Aorta (tissue), 5 donors: ENCODE measurements at regions of chr9 and their contacts with region 1.

Region 1: GRCh38 chr9:83544002-83544698 is 5.9 kb upstream of the FRMD3 start:
- DNase-seq: no peak
- ATAC-seq: peak; percentile 80
- H3K4me3 ChIP-seq: no peak overlapping the region
- H3K27ac ChIP-seq: no peak overlapping the region
- H3K4me1 ChIP-seq: no peaks in the 10 kb centered on the region
- H3K27me3 ChIP-seq: no peaks in the 10 kb centered on the region

Region 2: GRCh38 chr9:83208065-83208850 is 335.9 kb before region 1 on chr9:
- intact Hi-C with region 1: loop called (anchors 5 to 10 kb)
- DNase-seq: no peak
- ATAC-seq: no peak
- H3K4me3 ChIP-seq: no peak overlapping the region
- H3K27ac ChIP-seq: no peak overlapping the region
- H3K4me1 ChIP-seq: no peaks in the 10 kb centered on the region
- H3K27me3 ChIP-seq: no peaks in the 10 kb centered on the region

Region 3: GRCh38 chr9:83219152-83219923 is 324.8 kb before region 1 on chr9:
- intact Hi-C with region 1: loop called in 1 of 2 experiments (anchors 10 kb)
- DNase-seq: peak; percentile 76 to 88
- ATAC-seq: peak; percentile 94
- H3K4me3 ChIP-seq: peak overlapping the region; percentile 47 to 68
- H3K27ac ChIP-seq: no peak overlapping the region
- H3K4me1 ChIP-seq: no peaks in the 10 kb centered on the region
- H3K27me3 ChIP-seq: no peaks in the 10 kb centered on the region

Region 4: DNA sequence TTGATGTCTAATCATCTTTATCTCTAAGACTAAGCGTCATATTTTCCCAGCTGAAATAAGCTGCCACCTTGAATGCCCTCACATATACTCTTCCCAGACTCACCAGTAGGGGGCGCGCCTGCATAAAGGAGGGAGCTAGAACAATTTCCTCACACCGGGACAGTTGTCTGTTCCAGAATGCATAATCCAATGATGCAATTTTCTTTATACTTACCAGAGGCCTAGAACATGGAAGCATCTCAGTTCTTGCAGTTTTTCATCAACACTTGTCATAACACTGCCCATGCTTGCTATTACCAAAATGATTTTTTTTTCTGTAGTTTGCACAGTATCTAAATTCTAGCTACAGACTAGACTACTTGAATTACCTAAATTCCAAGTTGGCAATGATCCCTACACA is 209.8 kb before region 1 on chr9:
- intact Hi-C with region 1: loop called (anchors 1 to 2 kb)
- DNase-seq: peak; percentile 86 to 93
- ATAC-seq: peak; percentile 92
- H3K4me3 ChIP-seq: no peak overlapping the region
- H3K27ac ChIP-seq: no peak overlapping the region
- H3K4me1 ChIP-seq: no peaks in the 10 kb centered on the region
- H3K27me3 ChIP-seq: no peaks in the 10 kb centered on the region